ENCODE measurements at regions of chr9 and their contacts with region 1.

Region 1: GRCh38 chr9:128412120-128412790 is 8.4 kb upstream of the CERCAM start:
- DNase-seq: peak; percentile 76 to 99 (median 92)

Region 2: GRCh38 chr9:128296337-128297220 is 115.7 kb before region 1 on chr9:
- intact Hi-C with region 1: loop called (anchors 5 kb)
- DNase-seq: no peak

Region 3: DNA sequence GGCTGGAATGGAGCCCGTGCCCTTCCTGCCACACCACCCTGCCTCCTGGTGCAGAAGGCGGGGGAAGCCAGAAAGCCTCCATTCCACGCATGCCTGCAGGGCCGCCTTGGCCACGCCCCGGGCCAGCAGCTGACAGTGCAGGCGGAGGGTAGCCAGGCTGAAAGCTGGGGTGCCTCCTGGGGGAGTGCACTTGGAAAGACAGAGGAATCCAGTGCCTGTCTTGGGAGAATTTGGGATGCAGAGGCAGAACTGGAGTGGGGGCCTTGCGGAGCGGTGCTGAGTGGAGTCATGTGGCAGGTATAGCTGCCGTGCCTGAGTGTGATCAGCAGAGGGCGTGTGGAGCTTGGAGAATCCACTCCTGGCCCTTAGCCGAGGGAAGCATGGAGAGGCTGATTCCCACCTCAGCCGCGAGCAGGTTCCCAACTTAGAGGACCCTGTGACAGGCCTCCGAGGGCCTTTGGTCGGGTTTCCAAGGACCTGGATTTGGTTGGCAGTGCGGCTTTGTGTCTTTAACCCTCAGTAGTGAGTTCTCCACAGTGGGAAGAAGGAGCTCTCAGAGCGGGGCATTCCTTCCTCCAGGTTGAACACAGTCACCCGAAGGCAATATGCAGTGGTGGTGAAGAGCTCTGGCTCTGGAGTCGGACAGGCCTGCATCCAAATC is 50.1 kb before region 1 on chr9:
- intact Hi-C with region 1: loop called (anchors 1 kb)
- DNase-seq: peak; percentile 84 to 98 (median 89)

Region 4: DNA sequence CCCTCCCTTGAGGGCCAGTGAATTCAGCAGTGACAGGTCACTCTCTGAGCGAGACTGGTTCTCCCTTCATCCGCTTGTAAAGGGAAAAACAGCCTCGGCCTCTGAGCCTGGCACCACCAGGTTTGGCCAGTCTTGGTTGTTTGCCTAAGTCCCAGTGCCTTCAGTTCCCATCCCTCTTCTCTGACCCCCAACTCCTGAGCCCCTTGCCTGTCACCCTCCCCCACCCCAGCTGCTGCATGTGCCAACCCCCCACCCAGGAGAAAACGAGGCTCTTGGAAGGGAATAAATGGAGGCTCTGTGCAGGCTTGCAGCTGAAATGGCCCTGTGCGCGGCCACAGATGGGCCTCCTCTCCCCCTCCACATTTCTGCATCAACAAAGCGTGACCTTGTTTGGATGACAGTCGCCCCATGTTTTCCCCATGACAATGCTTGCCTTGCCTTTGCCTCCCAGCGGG is 38.0 kb before region 1 on chr9:
- intact Hi-C with region 1: loop called (anchors 1 kb)
- DNase-seq: peak; percentile 57 to 97 (median 80)